MCF 10A (cell line): ENCODE measurements at regions of chr11 and their contacts with region 1.

Region 1: DNA sequence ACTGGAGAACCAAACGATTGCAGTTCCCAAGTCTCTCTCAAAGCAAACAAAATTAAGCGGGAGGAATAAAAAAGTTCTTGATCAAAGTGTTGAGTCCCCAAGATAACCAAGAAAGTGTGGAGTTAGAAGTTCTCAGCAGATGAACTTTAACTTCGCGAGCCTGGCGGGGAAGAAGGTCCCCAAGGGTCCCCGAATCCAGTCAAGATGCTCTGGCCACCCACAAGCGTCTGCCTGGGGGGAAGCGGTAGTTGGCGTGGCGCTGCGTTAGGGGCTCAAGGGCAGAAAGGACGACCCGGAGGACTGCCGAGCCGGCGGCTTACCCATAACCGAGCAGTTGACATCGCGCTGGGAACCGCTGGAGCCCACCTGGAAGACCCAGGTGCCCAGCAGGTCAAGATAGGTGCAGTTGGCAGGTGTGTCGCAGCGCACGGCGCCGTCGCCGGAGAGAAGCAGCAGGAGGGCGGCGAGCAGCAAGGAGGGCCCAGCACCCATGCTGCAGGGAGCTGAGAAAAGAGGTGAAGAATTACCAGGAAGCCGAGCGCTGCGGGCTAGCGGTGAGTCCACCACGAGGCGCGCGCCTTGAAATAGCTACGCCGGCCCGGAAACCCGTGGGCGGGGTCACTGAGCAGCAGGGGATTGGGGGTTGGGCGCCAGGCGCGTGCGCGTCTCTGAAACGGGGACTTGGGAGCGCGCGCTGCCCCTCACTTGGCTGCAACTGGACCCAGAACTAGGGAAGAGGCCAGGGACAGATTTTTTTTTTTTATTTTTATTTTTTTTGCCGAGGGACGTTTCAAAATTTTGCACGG is at the start of gene CTSC:
- DNase-seq: peak; percentile 96
- H3K4me3 Mint-ChIP-seq: peak within 1 kb of the TSS; percentile 99
- H3K27ac Mint-ChIP-seq: peak within 1 kb of the TSS; percentile 97
- H3K4me1 Mint-ChIP-seq: peaks cover 25% of the 10 kb centered on the region
- H3K27me3 Mint-ChIP-seq: no peaks in the 10 kb centered on the region
- CTCF ChIP-seq: no peak
- total RNA-seq, gene CTSC: 79.1 and 103 TPM in 2 replicates

Region 2: DNA sequence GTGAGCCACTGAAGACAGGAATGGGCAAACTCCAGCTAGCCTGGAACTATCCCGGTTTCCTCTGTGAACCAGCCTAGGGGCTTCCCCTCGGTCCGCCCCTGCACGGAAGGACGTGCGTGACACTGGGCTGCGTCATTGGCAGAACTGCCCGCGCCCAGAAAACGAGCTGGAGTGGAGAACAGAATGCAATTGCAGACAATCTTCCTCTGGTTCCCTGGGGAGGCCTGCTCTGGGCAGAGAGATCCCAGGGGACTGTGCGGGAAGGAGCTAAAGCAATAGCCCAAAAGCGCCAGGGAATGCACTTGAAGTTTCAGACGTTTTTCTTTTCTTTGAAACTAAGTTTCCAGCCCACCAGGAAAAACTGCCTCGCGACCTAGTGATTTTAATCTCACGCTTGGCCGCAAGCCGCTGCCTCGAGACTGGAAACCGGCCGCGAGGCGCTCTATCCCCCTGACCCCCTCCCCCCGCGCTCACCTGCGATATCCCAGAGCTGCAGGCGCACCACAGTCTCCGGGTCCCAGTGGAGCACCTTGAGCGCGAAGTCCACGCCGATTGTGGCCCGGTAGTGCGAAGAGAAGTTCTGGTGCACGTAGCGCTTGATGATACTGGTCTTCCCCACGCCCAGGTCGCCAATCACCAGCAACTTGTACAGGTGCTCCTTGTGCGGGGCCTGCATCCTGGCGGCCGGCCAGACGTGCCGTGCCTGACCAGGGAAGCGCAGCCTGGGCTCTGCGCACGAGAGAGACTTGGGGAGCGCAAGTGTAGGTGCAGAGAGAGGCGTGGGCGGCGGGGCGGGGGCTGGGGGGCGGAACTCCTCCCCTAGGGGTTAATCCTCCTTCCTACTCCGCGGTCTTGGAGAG is 162.4 kb before region 1 on chr11 and contains the start of gene RAB38:
- CTCF ChIA-PET with region 1: interaction called, 3 read pairs
- POLR2A ChIA-PET with region 1: interaction called, 50 read pairs
- intact Hi-C with region 1: loop called (anchors 5 kb)
- DNase-seq: peak; percentile 91
- H3K4me3 Mint-ChIP-seq: peak within 1 kb of the TSS; percentile 85
- H3K27ac Mint-ChIP-seq: peak within 1 kb of the TSS; percentile 91
- H3K4me1 Mint-ChIP-seq: peaks cover 40% of the 10 kb centered on the region
- H3K27me3 Mint-ChIP-seq: no peaks in the 10 kb centered on the region
- CTCF ChIP-seq: no peak
- total RNA-seq, gene RAB38: 77.7 and 80.9 TPM in 2 replicates

Region 3: GRCh38 chr11:88310246-88310645 is 27.1 kb before region 1 on chr11:
- CTCF ChIA-PET with region 1: interaction called, 3 read pairs
- POLR2A ChIA-PET with region 1: interaction called, 10 read pairs
- intact Hi-C with region 1: no loop called
- DNase-seq: no peak
- H3K4me3 Mint-ChIP-seq: no peak overlapping the region
- H3K27ac Mint-ChIP-seq: peak overlapping the region; percentile 9
- H3K4me1 Mint-ChIP-seq: peaks cover 3% of the 10 kb centered on the region
- H3K27me3 Mint-ChIP-seq: no peaks in the 10 kb centered on the region
- CTCF ChIP-seq: no peak

Region 4: DNA sequence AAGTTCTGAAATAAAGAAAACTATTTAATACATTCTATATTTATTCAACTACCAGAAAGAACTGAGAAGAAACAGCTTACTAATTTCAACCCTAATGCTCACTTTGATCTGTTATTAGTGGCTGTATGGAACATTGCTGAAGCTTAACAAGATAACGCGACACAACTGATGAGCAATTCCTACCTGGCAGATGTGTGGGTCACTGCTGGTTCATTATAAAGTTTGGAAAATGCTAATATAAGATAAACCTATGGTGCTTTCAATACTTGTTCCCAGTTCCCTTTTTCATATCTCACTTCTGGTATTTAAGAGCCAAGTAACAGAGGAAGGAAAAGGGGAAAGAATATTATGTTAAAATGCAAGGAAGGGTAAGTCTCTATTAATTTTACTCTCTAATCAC is 10.3 kb before region 1 on chr11:
- CTCF ChIA-PET with region 1: interaction called, 4 read pairs
- POLR2A ChIA-PET with region 1: interaction called, 28 read pairs
- intact Hi-C with region 1: no loop called
- DNase-seq: no peak
- H3K4me3 Mint-ChIP-seq: no peak overlapping the region
- H3K27ac Mint-ChIP-seq: no peak overlapping the region
- H3K4me1 Mint-ChIP-seq: peaks cover 6% of the 10 kb centered on the region
- H3K27me3 Mint-ChIP-seq: no peaks in the 10 kb centered on the region
- CTCF ChIP-seq: no peak

Region 5: DNA sequence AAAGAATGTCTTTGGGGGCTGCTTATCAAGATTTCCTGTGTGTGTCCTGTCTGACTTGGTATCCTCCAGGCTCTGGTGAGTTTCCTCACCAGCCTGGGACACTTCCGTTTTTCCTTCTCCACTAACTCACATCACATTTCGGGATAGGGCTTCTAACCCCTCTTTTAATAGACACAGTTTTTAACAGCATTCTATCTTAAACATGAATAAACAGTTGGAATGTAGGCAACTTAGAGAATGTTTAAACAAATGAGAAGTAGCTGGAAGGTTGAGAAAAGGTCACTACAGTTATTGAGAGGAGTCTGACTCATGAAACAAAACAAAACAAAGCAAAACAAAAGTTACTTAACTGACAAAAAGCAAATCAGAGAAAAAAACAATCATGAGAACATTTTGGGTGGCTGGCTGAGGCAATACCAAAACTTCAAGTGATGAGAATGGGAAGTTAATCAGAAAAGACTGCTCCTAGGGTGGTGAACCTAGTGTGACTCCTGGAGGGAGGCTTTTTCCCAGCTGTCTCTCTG is 64.9 kb after region 1 on chr11:
- CTCF ChIA-PET with region 1: no interaction called
- POLR2A ChIA-PET with region 1: interaction called, 97 read pairs
- intact Hi-C with region 1: no loop called
- DNase-seq: peak; percentile 87
- H3K4me3 Mint-ChIP-seq: no peak overlapping the region
- H3K27ac Mint-ChIP-seq: peak overlapping the region; percentile 95
- H3K4me1 Mint-ChIP-seq: peaks cover 43% of the 10 kb centered on the region
- H3K27me3 Mint-ChIP-seq: no peaks in the 10 kb centered on the region
- CTCF ChIP-seq: no peak

Region 6: DNA sequence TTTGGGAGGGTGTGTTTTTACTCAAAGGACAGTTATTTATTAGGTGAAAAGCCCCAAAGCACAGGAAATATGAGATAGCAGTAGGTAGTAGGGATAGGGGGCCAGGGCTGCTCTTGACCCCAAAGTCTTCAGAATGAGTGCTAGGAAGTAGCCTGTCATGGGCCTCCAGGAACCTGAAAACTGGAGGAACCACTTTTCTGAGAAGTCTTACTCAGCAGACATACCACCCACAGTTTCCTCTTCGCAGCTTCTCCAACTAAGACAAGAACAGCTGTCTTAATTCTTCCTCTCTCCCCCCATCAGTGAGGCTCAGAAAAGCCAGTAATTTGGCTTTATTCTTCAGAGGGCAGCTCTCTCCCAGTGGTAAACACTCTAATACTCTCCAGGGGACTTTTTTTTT is 84.1 kb after region 1 on chr11:
- CTCF ChIA-PET with region 1: no interaction called
- POLR2A ChIA-PET with region 1: interaction called, 18 read pairs
- intact Hi-C with region 1: loop called (anchors 2 kb)
- DNase-seq: no peak
- H3K4me3 Mint-ChIP-seq: no peak overlapping the region
- H3K27ac Mint-ChIP-seq: peak overlapping the region; percentile 29
- H3K4me1 Mint-ChIP-seq: peaks cover 17% of the 10 kb centered on the region
- H3K27me3 Mint-ChIP-seq: no peaks in the 10 kb centered on the region
- CTCF ChIP-seq: no peak